Adrenal gland (tissue), 19 donors: ENCODE measurements at regions of chr21 and their contacts with region 1.

Region 1: GRCh38 chr21:39650801-39651595 is 38.3 kb downstream of the B3GALT5 start:
- DNase-seq: peak in 1 of 7 donors; percentile 30
- H3K4me3 ChIP-seq: no peak overlapping the region
- H3K27ac ChIP-seq: no peak overlapping the region
- H3K4me1 ChIP-seq: no peaks in the 10 kb centered on the region
- H3K27me3 ChIP-seq: no peaks in the 10 kb centered on the region
- CTCF ChIP-seq: no peak
- POLR2A ChIP-seq: no peak

Region 2: DNA sequence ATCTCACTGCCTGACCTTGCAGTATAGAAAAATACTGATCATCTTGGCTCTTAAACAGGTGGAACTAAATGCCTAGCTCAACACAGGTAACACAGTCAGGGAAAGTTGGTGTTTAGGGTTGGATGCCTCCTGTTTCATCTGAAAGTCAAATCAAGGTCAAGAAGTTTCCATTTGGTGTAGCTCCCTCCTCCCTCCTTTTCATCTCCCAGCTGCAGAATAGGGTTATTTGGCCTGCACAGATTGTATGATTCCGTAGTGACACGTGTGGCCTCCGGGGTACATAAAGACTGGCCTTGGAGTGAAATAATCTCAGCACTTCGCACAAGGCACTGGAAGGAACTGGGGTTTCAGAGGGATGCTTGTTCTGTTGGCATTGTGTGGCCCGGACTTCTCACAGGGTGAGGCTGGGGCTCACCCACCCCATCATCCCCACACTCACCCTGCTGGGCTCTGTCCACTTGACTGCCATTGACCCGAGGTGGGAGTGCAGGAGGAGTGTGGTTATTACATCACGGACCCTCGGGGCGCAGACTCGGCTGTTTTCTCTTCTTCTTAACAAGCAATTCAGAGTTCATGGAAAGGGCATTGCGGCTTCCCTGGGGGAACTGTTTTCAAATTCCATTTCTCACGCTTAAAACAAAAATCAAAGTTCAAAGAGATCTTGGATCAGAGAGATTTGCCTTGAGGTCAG is 112.4 kb after region 1 on chr21:
- intact Hi-C with region 1: loop called in 1 of 2 experiments (anchors 5 kb)
- DNase-seq: no peak
- H3K4me3 ChIP-seq: no peak overlapping the region
- H3K27ac ChIP-seq: no peak overlapping the region
- H3K4me1 ChIP-seq: no peaks in the 10 kb centered on the region
- H3K27me3 ChIP-seq: no peaks in the 10 kb centered on the region
- CTCF ChIP-seq: no peak
- POLR2A ChIP-seq: no peak